Gastrocnemius medialis (tissue), 4 donors: ENCODE measurements at regions of chr11 and their contacts with region 1.

Region 1: DNA sequence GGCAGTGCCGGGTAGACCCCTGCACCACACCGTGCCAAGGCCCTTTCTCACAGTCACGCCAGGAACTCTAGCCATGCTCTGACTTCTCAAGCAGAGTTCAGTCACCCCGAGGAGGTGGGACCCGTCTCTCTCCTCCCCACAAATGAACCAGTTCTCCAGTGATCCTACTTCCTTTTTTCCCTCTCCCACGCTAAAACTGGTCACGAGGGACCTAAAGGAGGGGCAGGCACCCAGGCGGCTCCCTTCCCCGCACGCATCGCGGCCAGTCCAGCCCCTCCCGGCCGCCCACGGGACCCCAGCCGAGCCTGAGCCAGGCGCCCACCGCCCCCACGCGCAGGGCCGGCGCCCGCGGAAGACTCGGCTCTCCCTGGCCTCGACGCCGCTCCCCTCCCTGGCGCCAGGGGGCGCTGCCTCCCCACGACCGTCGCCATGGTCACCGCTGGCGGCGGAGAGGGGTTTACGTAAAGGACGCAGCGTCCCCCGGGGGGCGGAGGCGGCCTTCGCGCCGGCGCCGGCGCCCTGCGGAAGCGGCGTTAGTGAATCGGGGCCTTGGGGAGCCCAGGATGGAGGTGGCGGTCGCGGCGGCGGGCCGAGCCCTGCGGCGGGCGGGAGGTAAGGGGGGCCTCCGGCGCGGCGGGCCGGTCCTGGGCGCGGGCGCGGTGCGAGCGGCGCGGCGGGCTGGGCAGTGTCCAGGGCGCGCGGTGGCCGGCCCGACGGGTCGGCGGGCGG is at the start of gene DAGLA:
- DNase-seq: peak; percentile 48 to 52
- ATAC-seq: peak; percentile 66 to 70
- H3K4me3 ChIP-seq: peak within 1 kb of the TSS; percentile 46 to 62 (median 56)
- H3K27ac ChIP-seq: peak within 1 kb of the TSS in 3 of 4 donors; percentile 45 to 72 (median 61)
- H3K4me1 ChIP-seq: peaks cover 28 to 32% of the 10 kb centered on the region in 2 donors
- H3K27me3 ChIP-seq: no peaks in the 10 kb centered on the region
- CTCF ChIP-seq: peak; percentile 79 to 99 (median 97)
- POLR2A ChIP-seq: no peak
- total RNA-seq, gene DAGLA: 0.58 to 5.5 (median 2.9) TPM

Region 2: DNA sequence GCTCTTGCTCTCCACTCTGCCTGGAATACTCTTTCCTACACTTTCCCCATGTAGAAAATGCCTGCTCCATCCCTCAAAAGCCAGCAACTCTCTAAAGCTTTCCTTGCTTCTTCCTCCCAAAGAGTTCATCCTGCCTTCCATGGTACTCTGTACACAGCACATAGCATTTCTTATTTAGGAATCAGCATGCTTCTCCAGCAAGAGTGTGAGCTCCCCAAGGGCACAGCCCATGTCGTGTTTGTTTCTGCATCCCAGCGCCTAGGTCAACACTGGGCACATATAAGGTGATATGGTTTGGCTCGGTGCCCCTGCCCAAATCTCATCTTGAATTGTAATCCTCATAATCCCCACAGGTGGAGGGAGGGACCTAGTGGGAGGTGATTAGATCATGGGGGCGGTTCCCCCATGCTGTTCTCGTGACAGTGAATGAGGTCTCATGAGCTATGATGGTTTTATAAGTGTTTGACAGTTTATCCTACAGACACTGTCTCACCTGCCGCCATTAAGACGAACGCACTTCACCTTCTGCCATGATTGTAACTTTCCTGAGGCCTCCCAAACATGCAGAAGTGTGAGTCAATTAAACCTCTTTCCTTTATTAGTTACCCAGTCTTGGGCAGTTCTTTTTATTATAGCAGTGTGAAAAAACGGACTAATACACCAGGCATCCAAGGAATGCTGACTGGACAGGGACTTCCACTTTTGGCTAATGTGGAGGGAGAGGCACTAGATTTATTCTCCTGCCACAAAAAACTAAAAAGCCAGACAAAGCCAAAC is 527.1 kb before region 1 on chr11:
- in situ Hi-C with region 1: no loop called
- intact Hi-C with region 1: loop called (anchors 5 kb)
- DNase-seq: no peak
- ATAC-seq: no peak
- H3K4me3 ChIP-seq: no peak overlapping the region
- H3K27ac ChIP-seq: peak overlapping the region in 3 of 4 donors; percentile 4 to 71 (median 42)
- H3K4me1 ChIP-seq: peaks cover 43 to 52% of the 10 kb centered on the region in 2 donors
- H3K27me3 ChIP-seq: no peaks in the 10 kb centered on the region
- CTCF ChIP-seq: no peak
- POLR2A ChIP-seq: no peak

Region 3: DNA sequence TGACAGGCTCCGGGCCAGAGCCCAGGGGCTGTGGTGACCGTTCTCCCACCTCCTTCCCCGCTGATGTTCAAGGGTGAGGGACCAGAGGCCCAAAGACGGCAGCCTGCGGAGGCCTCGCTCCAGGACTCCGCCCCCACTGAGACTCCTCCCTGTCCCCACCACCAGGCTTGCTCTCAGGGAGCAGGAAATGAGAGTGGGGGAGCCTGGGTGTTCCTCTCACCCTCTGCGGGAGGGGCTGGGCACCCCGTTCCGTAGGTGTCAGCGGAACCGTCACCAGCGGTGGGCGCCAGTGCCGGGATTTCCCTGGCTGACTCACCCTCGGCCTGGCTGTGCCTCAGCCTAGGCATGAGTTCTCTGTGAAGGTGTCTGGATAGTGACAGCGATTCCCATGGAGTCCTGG is 15.9 kb after region 1 on chr11:
- in situ Hi-C with region 1: no loop called
- intact Hi-C with region 1: loop called (anchors 2 kb)
- DNase-seq: peak; percentile 75 to 85
- ATAC-seq: peak; percentile 51 to 58
- H3K4me3 ChIP-seq: peak overlapping the region; percentile 20 to 50 (median 38)
- H3K27ac ChIP-seq: peak overlapping the region; percentile 84 to 97 (median 90)
- H3K4me1 ChIP-seq: peaks cover 73 to 80% of the 10 kb centered on the region in 2 donors
- H3K27me3 ChIP-seq: no peaks in the 10 kb centered on the region
- CTCF ChIP-seq: no peak
- POLR2A ChIP-seq: peak in 1 of 2 donors; percentile 27